Naive thymus-derived CD4-positive, alpha-beta T cell (primary cell): ENCODE measurements at regions of chr4 and their contacts with region 1.

Region 1: GRCh38 chr4:113761620-113762185 is at the start of gene CAMK2D:
- DNase-seq: peak; percentile 66 to 91 (median 87)
- ATAC-seq: peak; percentile 71
- H3K4me3 ChIP-seq: peak within 1 kb of the TSS; percentile 97
- H3K4me3 Mint-ChIP-seq: peak within 1 kb of the TSS; percentile 92 to 100 (median 96)
- H3K27ac ChIP-seq: peak within 1 kb of the TSS; percentile 93
- H3K27ac Mint-ChIP-seq: peak within 1 kb of the TSS; percentile 96 to 100 (median 98)
- H3K4me1 ChIP-seq: peaks cover 5 to 18% of the 10 kb centered on the region in 2 donors
- H3K4me1 Mint-ChIP-seq: peaks cover 15 to 51% (median 43%) of the 10 kb centered on the region in 7 donors
- H3K27me3 ChIP-seq: no peaks in the 10 kb centered on the region
- H3K27me3 Mint-ChIP-seq: peaks cover 0 to 3% (median 0%) of the 10 kb centered on the region in 5 donors
- total RNA-seq, gene CAMK2D: 35.8 to 41.2 (median 40.0) TPM

Region 2: GRCh38 chr4:112060212-112060611 is 1701.5 kb before region 1 on chr4:
- CTCF ChIA-PET with region 1: no interaction called
- POLR2A ChIA-PET with region 1: no interaction called
- intact Hi-C with region 1: no loop called
- DNase-seq: no peak
- ATAC-seq: no peak
- H3K4me3 ChIP-seq: no peak overlapping the region
- H3K4me3 Mint-ChIP-seq: no peak overlapping the region
- H3K27ac ChIP-seq: no peak overlapping the region
- H3K27ac Mint-ChIP-seq: no peak overlapping the region
- H3K4me1 ChIP-seq: no peaks in the 10 kb centered on the region
- H3K4me1 Mint-ChIP-seq: peaks cover 0 to 6% (median 0%) of the 10 kb centered on the region in 7 donors
- H3K27me3 ChIP-seq: peaks cover 0 to 4% of the 10 kb centered on the region in 2 donors
- H3K27me3 Mint-ChIP-seq: peaks cover 0 to 13% (median 7%) of the 10 kb centered on the region in 5 donors

Region 3: DNA sequence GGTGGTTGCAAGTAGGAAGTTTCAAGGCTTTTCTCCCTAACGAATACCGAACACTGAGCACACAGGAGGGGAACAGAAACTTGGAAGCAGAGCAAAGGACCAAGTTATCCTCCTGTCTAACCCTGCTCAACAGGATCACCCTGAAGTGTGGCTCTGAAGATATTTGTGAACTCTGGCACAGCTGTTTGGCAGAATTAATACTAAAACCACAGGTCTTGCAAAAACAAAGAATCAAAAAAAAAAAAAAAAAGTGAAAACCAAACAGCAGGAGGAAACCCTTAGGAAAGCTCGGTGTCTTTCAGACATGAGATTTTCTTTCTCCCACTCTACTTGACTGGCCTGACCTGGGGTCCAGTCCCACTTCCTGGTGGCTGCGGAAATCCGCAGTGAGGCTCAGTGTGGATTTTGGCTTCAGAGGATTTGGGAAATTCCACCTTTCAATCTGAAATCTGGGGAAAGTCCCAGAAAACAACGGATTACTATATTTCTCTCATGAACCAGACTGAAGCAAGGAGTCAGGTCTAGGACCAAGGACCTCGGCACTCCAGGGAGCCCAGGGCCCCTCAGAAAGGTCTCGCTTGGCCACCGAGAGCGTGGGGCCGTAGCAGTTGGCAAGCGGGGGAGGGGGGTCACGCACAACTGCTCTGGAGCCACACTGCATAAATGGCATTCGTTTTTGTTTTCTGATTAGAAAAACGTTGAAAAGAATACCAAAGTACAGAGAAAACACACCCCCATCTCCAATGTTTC is 1476.9 kb before region 1 on chr4:
- CTCF ChIA-PET with region 1: no interaction called
- POLR2A ChIA-PET with region 1: no interaction called
- intact Hi-C with region 1: loop called in 1 of 2 experiments (anchors 5 kb)
- DNase-seq: no peak
- ATAC-seq: no peak
- H3K4me3 ChIP-seq: peak overlapping the region; percentile 94
- H3K4me3 Mint-ChIP-seq: peak overlapping the region; percentile 87 to 97 (median 92)
- H3K27ac ChIP-seq: peak overlapping the region; percentile 81
- H3K27ac Mint-ChIP-seq: peak overlapping the region; percentile 81 to 95 (median 91)
- H3K4me1 ChIP-seq: peaks cover 31 to 54% of the 10 kb centered on the region in 2 donors
- H3K4me1 Mint-ChIP-seq: peaks cover 47 to 88% (median 83%) of the 10 kb centered on the region in 7 donors
- H3K27me3 ChIP-seq: no peaks in the 10 kb centered on the region
- H3K27me3 Mint-ChIP-seq: no peaks in the 10 kb centered on the region

Region 4: DNA sequence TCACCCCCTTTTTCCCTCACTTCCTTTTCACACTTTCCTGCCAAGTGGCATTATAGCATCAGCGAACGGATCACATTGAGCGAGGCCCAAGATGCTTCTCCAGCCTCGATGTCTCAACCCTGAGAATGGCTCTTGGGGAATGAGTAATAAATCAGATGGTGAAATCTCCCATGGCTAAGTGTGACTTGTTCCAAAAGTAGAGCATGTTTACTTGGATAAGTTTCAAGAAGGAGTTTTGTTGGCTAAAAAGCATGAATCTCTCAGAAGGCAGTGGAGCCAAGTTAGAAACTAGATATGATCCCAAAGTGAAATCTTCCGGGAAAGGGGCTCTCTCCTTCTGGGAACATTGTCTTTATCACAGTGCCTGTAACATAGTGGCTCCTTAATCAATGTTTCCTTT is 316.4 kb before region 1 on chr4:
- CTCF ChIA-PET with region 1: no interaction called
- POLR2A ChIA-PET with region 1: no interaction called
- intact Hi-C with region 1: loop called in 1 of 2 experiments (anchors 5 kb)
- DNase-seq: no peak
- ATAC-seq: no peak
- H3K4me3 ChIP-seq: no peak overlapping the region
- H3K4me3 Mint-ChIP-seq: no peak overlapping the region
- H3K27ac ChIP-seq: no peak overlapping the region
- H3K27ac Mint-ChIP-seq: no peak overlapping the region
- H3K4me1 ChIP-seq: no peaks in the 10 kb centered on the region
- H3K4me1 Mint-ChIP-seq: peaks cover 0 to 6% (median 4%) of the 10 kb centered on the region in 7 donors
- H3K27me3 ChIP-seq: no peaks in the 10 kb centered on the region
- H3K27me3 Mint-ChIP-seq: peaks cover 0 to 7% (median 0%) of the 10 kb centered on the region in 5 donors

Region 5: DNA sequence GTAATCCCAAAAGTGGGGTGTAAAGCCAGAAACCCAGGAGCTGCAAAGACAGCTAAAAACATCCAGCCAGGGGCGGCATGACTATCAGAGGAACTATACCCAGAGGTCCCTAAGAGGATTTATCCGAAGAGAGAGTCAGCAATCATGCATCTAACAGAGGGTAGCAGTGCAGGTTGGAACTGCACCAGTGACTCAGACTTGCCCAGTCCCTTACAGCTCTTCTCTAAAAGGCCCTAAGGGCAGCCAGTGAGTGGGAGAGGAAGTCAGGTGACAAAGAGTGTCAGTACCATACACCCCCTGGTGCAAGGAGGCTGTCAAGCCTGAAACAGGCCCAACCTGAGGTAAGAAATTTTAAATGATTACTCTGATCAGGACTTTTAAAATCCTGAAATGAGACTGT is 88.3 kb before region 1 on chr4:
- CTCF ChIA-PET with region 1: no interaction called
- POLR2A ChIA-PET with region 1: interaction called, 7 read pairs
- intact Hi-C with region 1: loop called in 1 of 2 experiments (anchors 1 kb)
- DNase-seq: peak in 1 of 9 donors; percentile 42
- ATAC-seq: peak; percentile 68
- H3K4me3 ChIP-seq: no peak overlapping the region
- H3K4me3 Mint-ChIP-seq: peak overlapping the region in 5 of 10 donors; percentile 11 to 41 (median 34)
- H3K27ac ChIP-seq: no peak overlapping the region
- H3K27ac Mint-ChIP-seq: peak overlapping the region in 3 of 9 donors; percentile 30 to 67 (median 43)
- H3K4me1 ChIP-seq: peaks cover 15 to 21% of the 10 kb centered on the region in 2 donors
- H3K4me1 Mint-ChIP-seq: peaks cover 29 to 68% (median 55%) of the 10 kb centered on the region in 7 donors
- H3K27me3 ChIP-seq: no peaks in the 10 kb centered on the region
- H3K27me3 Mint-ChIP-seq: no peaks in the 10 kb centered on the region

Region 6: DNA sequence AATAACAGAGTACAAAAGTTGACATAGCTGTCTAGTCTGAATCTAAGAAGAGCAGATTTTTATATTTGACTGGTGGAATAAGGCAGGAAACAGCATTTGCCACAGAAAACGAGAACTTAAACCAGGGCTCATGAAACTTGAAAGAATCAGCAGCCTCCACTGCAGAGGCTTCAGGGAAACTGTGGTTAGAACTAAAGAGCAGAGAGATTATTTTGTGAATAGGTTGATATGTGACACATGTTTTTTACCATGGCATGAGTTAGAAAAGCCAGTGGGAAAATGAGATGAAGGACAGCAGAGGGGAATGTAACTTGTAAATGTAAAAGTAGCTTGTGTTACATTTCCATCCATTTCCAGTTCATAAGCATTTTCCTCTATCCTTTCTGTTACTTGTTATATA is 63.6 kb after region 1 on chr4:
- CTCF ChIA-PET with region 1: no interaction called
- POLR2A ChIA-PET with region 1: interaction called, 3 read pairs
- intact Hi-C with region 1: loop called in 1 of 2 experiments (anchors 2 kb)
- DNase-seq: peak in 7 of 9 donors; percentile 10 to 63 (median 52)
- ATAC-seq: peak; percentile 77
- H3K4me3 ChIP-seq: no peak overlapping the region
- H3K4me3 Mint-ChIP-seq: peak overlapping the region in 9 of 10 donors; percentile 3 to 70 (median 57)
- H3K27ac ChIP-seq: peak overlapping the region; percentile 26
- H3K27ac Mint-ChIP-seq: peak overlapping the region in 8 of 9 donors; percentile 5 to 88 (median 38)
- H3K4me1 ChIP-seq: peaks cover 7 to 34% of the 10 kb centered on the region in 2 donors
- H3K4me1 Mint-ChIP-seq: peaks cover 29 to 52% (median 47%) of the 10 kb centered on the region in 7 donors
- H3K27me3 ChIP-seq: no peaks in the 10 kb centered on the region
- H3K27me3 Mint-ChIP-seq: peaks cover 0 to 5% (median 0%) of the 10 kb centered on the region in 5 donors

Region 7: GRCh38 chr4:114694770-114695169 is 933.1 kb after region 1 on chr4:
- CTCF ChIA-PET with region 1: no interaction called
- POLR2A ChIA-PET with region 1: no interaction called
- intact Hi-C with region 1: loop called in 1 of 2 experiments (anchors 10 kb)
- DNase-seq: peak in 5 of 9 donors; percentile 1 to 17 (median 9)
- ATAC-seq: no peak
- H3K4me3 ChIP-seq: no peak overlapping the region
- H3K4me3 Mint-ChIP-seq: no peak overlapping the region
- H3K27ac ChIP-seq: no peak overlapping the region
- H3K27ac Mint-ChIP-seq: no peak overlapping the region
- H3K4me1 ChIP-seq: no peaks in the 10 kb centered on the region
- H3K4me1 Mint-ChIP-seq: peaks cover 0 to 6% (median 0%) of the 10 kb centered on the region in 7 donors
- H3K27me3 ChIP-seq: no peaks in the 10 kb centered on the region
- H3K27me3 Mint-ChIP-seq: peaks cover 0 to 16% (median 7%) of the 10 kb centered on the region in 5 donors

Region 8: DNA sequence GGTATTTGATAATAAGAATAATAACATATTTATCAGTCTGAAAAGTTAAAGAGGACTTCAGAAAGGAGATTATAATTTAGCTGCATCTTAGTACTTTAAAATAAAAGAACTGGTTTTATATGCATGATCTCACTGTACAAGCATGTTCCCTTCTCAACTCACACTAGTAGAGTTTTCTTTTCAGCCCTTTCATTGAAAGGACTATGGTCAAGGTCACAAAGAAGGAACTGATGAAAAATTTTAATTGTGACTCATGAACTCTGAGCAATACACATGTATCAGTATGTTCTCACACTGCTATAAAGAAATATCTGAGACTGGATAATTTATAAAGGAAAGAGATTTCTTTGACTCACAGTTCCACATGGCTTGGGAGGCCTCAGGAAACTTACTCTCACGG is 1425.4 kb after region 1 on chr4:
- CTCF ChIA-PET with region 1: no interaction called
- POLR2A ChIA-PET with region 1: no interaction called
- intact Hi-C with region 1: no loop called
- DNase-seq: no peak
- ATAC-seq: no peak
- H3K4me3 ChIP-seq: no peak overlapping the region
- H3K4me3 Mint-ChIP-seq: no peak overlapping the region
- H3K27ac ChIP-seq: no peak overlapping the region
- H3K27ac Mint-ChIP-seq: no peak overlapping the region
- H3K4me1 ChIP-seq: no peaks in the 10 kb centered on the region
- H3K4me1 Mint-ChIP-seq: no peaks in the 10 kb centered on the region
- H3K27me3 ChIP-seq: no peaks in the 10 kb centered on the region
- H3K27me3 Mint-ChIP-seq: no peaks in the 10 kb centered on the region